Panc1 (cell line): ENCODE measurements at regions of chr7 and their contacts with region 1.

Region 1: GRCh38 chr7:130421684-130422083 is 19.1 kb downstream of the CEP41 start:
- DNase-seq: no peak
- ATAC-seq: no peak
- H3K4me3 ChIP-seq: no peak overlapping the region
- H3K27ac ChIP-seq: no peak overlapping the region
- H3K4me1 ChIP-seq: no peaks in the 10 kb centered on the region
- H3K27me3 ChIP-seq: no peaks in the 10 kb centered on the region
- CTCF ChIP-seq: no peak

Region 2: DNA sequence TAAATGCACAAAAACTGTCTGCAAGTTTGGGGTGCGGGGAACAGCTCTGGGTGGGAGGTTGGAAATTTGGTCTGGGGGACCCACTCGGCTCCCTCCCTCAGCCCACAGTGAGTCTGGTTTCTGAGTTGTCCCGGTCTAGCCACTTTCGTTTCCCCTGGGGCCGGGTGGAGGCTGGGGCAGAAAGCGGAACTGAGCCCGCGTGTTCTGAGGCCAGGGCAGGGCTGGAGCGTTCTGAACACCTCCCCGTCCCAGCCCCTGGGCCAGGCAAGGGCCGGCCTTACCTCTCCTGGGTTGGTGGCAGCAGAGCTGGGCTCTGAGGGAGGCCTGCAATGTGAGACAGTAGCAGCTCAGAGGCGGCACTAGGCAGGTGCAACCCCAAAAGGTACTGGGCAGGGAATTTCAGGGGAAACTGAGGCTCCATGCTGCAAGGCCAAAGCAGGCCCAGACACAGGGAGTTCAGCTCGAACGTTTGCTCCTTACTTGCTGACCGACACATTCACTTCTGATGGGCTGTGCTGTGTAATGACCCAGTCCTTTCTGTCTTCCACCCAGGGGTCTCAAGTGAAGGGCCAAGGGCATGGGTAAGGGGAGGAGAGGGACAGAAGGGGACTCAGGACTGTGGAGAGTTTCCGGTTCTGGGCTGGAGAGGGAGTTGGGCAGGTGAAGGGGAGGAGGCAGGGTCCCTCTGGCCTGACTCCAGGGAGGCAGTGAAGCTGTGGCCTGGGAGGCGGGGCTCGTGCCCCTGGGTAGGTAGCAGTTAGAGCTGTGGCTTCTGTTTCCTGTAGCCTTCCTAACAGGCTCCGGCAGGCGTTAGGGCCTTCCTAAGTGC is 1481.0 kb before region 1 on chr7:
- CTCF ChIA-PET with region 1: no interaction called
- POLR2A ChIA-PET with region 1: no interaction called
- in situ Hi-C with region 1: no loop called
- intact Hi-C with region 1: no loop called
- DNase-seq: no peak
- ATAC-seq: no peak
- H3K4me3 ChIP-seq: no peak overlapping the region
- H3K27ac ChIP-seq: no peak overlapping the region
- H3K4me1 ChIP-seq: no peaks in the 10 kb centered on the region
- H3K27me3 ChIP-seq: no peaks in the 10 kb centered on the region
- CTCF ChIP-seq: no peak

Region 3: DNA sequence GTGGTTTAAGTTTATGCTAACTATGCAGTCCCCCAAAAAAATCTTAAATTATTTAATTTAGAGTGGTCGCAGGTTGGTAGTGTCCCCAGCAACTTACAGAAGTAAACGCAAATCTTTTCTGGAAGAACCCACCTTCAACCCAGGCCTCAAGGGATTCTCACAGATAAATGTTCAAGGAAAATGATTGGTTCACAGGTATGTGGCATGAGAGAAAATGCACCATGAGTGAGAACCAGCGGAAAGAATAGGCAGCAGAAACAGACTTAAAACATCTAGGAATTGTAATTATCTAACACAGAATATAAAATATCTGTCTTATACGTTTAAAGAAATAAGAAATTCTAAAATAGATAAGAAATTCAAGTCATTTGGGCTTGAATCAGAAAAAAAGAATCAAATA is 79.8 kb before region 1 on chr7:
- CTCF ChIA-PET with region 1: no interaction called
- POLR2A ChIA-PET with region 1: interaction called, 11 read pairs
- in situ Hi-C with region 1: no loop called
- intact Hi-C with region 1: no loop called
- DNase-seq: no peak
- ATAC-seq: no peak
- H3K4me3 ChIP-seq: no peak overlapping the region
- H3K27ac ChIP-seq: no peak overlapping the region
- H3K4me1 ChIP-seq: no peaks in the 10 kb centered on the region
- H3K27me3 ChIP-seq: no peaks in the 10 kb centered on the region
- CTCF ChIP-seq: no peak